Sciatic nerve (tissue), 2 donors: ENCODE measurements at regions of chr5 and their contacts with region 1.

Region 1: GRCh38 chr5:90434116-90434714 is 24.7 kb upstream of the CETN3 start:
- DNase-seq: no peak
- ATAC-seq: no peak

Region 2: DNA sequence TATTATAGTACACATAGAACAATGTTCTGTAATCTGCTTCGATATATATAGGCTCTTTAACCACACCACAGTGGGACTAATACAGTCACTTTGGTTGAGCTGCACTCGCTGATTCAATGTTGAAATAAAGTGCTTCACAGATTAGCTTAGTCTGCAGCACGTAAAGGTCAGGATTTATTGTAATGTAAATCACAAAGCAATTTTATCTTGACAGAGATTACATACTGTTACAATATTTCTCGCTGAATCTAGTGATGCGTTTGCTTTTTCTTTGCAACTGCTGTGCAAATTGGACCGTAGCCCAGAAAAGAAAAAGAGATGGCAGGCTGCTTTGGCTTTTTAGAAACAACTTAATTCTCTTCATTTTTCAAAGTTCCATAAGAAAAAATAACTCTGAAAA is 77.6 kb before region 1 on chr5:
- intact Hi-C with region 1: no loop called
- DNase-seq: no peak
- ATAC-seq: no peak

Region 3: DNA sequence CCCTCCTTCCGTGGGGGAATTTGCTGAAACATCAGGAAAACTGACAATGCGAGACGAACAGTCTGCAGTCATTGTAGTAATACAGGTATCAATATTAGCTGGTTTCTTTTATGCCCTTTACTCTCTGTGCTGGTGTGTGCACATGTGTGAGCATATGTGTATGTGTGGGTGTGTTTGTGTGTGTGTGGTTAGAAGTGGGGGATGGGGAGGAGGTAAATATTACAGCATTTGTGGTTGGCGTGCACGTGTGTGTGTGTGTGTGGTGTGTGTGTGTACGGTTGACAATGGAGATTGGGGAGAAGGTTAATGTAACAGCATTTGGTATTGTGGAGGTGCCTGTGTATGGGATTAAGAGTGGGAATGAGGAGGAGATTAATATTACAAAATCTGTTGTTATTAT is 343.7 kb after region 1 on chr5:
- intact Hi-C with region 1: loop called (anchors 10 kb)
- DNase-seq: no peak
- ATAC-seq: no peak